Activated CD8-positive, alpha-beta T cell treated with anti-CD3 and anti-CD28 coated beads, Interleukin-2, amount 10 ng/mL, durations not matched to agents 7 days and 5 days (primary cell): ENCODE measurements at regions of chr11 and their contacts with region 1.

Region 1: DNA sequence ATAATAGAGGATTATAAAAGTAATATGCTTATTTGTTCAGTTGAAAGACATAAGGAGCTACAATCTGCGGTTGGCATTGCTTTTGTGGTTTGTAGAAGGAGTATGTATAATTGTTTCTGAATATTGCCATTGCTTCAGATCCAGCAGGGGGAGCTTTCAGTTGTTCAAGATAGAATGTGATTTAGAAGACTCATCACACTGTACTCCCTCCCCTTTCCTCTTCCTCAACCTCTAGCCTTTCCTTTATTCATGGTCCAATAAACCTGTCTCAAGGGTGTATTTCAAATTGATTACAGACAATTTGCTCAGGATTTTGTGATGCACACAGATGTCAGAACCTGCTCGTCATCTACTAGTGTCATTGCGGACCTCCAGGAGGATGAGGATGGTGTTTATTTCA is 9.8 kb downstream of the PRMT3 start:
- DNase-seq: peak; percentile 64
- ATAC-seq: peak; percentile 94
- H3K4me3 Mint-ChIP-seq: no peak overlapping the region
- H3K27ac Mint-ChIP-seq: no peak overlapping the region
- H3K4me1 Mint-ChIP-seq: peaks cover 13% of the 10 kb centered on the region
- H3K27me3 Mint-ChIP-seq: no peaks in the 10 kb centered on the region

Region 2: GRCh38 chr11:20415432-20415831 is 18.2 kb after region 1 on chr11:
- CTCF ChIA-PET with region 1: interaction called, 30 read pairs
- POLR2A ChIA-PET with region 1: no interaction called
- DNase-seq: no peak
- ATAC-seq: no peak
- H3K4me3 Mint-ChIP-seq: no peak overlapping the region
- H3K27ac Mint-ChIP-seq: no peak overlapping the region
- H3K4me1 Mint-ChIP-seq: peaks cover 4% of the 10 kb centered on the region
- H3K27me3 Mint-ChIP-seq: no peaks in the 10 kb centered on the region

Region 3: GRCh38 chr11:20443596-20443995 is 46.3 kb after region 1 on chr11:
- CTCF ChIA-PET with region 1: interaction called, 21 read pairs
- POLR2A ChIA-PET with region 1: no interaction called
- DNase-seq: no peak
- ATAC-seq: no peak
- H3K4me3 Mint-ChIP-seq: no peak overlapping the region
- H3K27ac Mint-ChIP-seq: no peak overlapping the region
- H3K4me1 Mint-ChIP-seq: peaks cover 3% of the 10 kb centered on the region
- H3K27me3 Mint-ChIP-seq: no peaks in the 10 kb centered on the region

Region 4: DNA sequence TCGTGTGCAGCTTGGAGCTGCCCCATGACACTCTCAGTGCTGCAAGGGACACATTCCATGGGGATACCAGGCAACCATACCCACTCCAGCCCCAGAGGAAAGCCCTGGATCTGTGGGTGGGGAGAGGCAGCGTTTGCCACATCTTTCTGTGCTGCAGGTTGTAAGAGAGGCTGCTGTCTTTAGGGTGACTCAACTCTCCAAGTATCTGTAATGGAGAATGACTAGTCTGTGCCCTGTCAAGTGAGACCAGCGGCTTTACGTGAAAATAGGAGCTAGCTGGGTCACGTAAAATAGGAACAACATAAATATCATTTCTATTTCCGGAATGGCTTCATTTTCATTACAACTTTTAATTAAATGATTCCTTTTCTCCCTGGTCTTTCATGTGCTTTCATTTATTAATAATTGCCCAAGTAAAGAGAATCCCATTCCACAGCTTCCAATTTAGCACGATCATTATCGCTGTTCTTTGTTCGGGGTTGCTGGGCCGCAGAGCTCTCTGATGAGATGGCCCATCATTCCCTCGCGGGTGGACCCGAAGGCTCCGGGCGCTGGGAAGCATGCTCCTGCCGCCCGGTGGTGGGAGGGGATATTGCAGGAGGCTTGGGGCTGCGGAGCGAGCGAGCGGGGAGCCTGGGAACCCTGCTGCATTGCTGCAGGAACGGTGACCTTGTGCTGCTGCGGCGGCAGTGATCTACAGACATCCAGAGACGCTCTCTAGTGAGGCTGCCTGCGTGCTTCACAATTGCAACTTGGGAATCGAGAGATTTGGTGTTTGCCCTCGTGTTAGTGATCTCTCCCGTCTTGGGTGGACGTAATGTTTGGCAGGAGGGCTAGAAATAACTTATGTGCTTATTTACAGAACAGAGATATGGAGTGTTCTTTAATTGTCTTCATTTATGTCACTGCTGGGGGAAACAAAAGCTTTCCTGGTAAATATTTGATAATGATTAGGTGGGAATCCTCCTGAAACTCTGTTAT is 212.7 kb after region 1 on chr11:
- CTCF ChIA-PET with region 1: interaction called, 24 read pairs
- POLR2A ChIA-PET with region 1: no interaction called
- DNase-seq: peak; percentile 70
- ATAC-seq: peak; percentile 85
- H3K4me3 Mint-ChIP-seq: peak overlapping the region; percentile 56
- H3K27ac Mint-ChIP-seq: no peak overlapping the region
- H3K4me1 Mint-ChIP-seq: peaks cover 10% of the 10 kb centered on the region
- H3K27me3 Mint-ChIP-seq: peaks cover 54% of the 10 kb centered on the region